ENCODE measurements at regions of chr17 and their contacts with region 1.

Region 1: DNA sequence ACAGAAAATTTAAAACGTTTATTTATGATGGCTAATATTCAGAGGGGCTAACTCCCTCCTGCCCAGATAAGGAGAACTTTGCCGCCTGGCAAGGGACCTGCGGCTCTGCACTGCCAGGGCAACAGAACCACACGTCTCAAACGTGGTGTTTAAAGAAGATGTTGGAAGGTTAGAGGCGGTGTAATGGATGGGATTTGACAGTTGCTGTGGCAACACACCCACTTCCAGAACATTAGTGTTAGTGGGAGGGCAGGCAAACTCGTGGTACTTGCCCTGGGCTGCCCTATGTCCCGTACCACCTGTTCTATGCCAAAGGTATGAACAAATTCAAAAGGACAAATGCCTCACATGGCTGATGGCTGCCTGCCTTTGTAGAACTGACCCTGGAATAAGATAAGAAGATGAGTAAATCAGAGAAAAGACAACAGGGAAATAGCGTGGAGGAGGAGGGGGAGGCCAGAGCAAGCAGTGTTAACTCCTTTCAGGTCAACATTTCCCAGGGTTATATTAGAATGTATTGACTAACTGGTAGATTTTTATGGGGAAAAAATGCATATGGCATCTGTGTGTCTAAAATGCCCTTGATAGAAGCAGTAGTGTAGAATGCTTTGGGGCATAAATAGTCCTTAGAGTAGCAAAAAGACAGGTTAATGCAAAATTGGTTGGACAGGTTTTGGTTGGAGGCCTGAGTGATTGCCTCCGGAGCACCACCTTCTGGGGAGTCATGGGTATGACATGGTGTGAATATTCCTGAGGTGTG is 30.8 kb downstream of the HLF start:
- DNase-seq: peak in 4 of 5 donors; percentile 58 to 64 (median 64)
- H3K4me3 ChIP-seq: no peak overlapping the region
- H3K4me3 Mint-ChIP-seq: no peak overlapping the region
- H3K27ac ChIP-seq: no peak overlapping the region
- H3K27ac Mint-ChIP-seq: peak overlapping the region in 2 of 7 donors; percentile 10 to 24
- H3K4me1 ChIP-seq: no peaks in the 10 kb centered on the region
- H3K4me1 Mint-ChIP-seq: peaks cover 0 to 5% (median under 1%) of the 10 kb centered on the region in 4 donors
- H3K27me3 ChIP-seq: no peaks in the 10 kb centered on the region
- H3K27me3 Mint-ChIP-seq: no peaks in the 10 kb centered on the region

Region 2: GRCh38 chr17:55053855-55054254 is 241.7 kb before region 1 on chr17:
- CTCF ChIA-PET with region 1: interaction called, 12 read pairs
- POLR2A ChIA-PET with region 1: no interaction called
- intact Hi-C with region 1: loop called (anchors 1 kb)
- DNase-seq: peak in 3 of 5 donors; percentile 12 to 22 (median 18)
- H3K4me3 ChIP-seq: no peak overlapping the region
- H3K4me3 Mint-ChIP-seq: no peak overlapping the region
- H3K27ac ChIP-seq: no peak overlapping the region
- H3K27ac Mint-ChIP-seq: peak overlapping the region in 1 of 7 donors; percentile 29
- H3K4me1 ChIP-seq: no peaks in the 10 kb centered on the region
- H3K4me1 Mint-ChIP-seq: no peaks in the 10 kb centered on the region
- H3K27me3 ChIP-seq: no peaks in the 10 kb centered on the region
- H3K27me3 Mint-ChIP-seq: no peaks in the 10 kb centered on the region

Region 3: GRCh38 chr17:55230716-55231115 is 64.9 kb before region 1 on chr17:
- CTCF ChIA-PET with region 1: interaction called, 3 read pairs
- POLR2A ChIA-PET with region 1: no interaction called
- intact Hi-C with region 1: loop called (anchors 1 kb)
- DNase-seq: no peak
- H3K4me3 ChIP-seq: no peak overlapping the region
- H3K4me3 Mint-ChIP-seq: no peak overlapping the region
- H3K27ac ChIP-seq: no peak overlapping the region
- H3K27ac Mint-ChIP-seq: peak overlapping the region in 2 of 7 donors; percentile 13 to 48
- H3K4me1 ChIP-seq: no peaks in the 10 kb centered on the region
- H3K4me1 Mint-ChIP-seq: peaks cover under 1 to 6% (median 2%) of the 10 kb centered on the region in 4 donors
- H3K27me3 ChIP-seq: no peaks in the 10 kb centered on the region
- H3K27me3 Mint-ChIP-seq: peaks cover 0 to 1% of the 10 kb centered on the region in 2 donors

Region 4: DNA sequence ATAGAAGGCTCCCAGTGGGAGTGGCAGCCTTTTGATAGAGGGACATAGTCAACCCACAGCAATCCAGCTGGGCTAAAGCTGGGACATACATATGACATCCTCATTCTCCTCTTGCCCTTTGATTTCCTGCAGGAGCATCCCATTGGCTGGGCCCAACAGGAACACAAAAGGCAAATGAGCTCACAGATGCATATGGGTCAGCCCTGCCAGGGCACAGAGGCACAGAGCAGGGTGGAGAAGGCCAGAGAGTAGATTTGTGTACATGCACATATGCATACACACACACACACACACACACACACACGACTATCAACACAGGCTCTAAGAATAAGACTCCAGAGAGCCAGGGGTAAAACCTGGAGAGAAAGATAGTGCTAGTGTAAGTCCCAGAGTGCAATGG is 67.4 kb after region 1 on chr17:
- CTCF ChIA-PET with region 1: no interaction called
- POLR2A ChIA-PET with region 1: no interaction called
- intact Hi-C with region 1: no loop called
- DNase-seq: no peak
- H3K4me3 ChIP-seq: no peak overlapping the region
- H3K4me3 Mint-ChIP-seq: no peak overlapping the region
- H3K27ac ChIP-seq: no peak overlapping the region
- H3K27ac Mint-ChIP-seq: no peak overlapping the region
- H3K4me1 ChIP-seq: no peaks in the 10 kb centered on the region
- H3K4me1 Mint-ChIP-seq: no peaks in the 10 kb centered on the region
- H3K27me3 ChIP-seq: peaks cover 3% of the 10 kb centered on the region
- H3K27me3 Mint-ChIP-seq: peaks cover 2 to 8% of the 10 kb centered on the region in 2 donors

Region 5: DNA sequence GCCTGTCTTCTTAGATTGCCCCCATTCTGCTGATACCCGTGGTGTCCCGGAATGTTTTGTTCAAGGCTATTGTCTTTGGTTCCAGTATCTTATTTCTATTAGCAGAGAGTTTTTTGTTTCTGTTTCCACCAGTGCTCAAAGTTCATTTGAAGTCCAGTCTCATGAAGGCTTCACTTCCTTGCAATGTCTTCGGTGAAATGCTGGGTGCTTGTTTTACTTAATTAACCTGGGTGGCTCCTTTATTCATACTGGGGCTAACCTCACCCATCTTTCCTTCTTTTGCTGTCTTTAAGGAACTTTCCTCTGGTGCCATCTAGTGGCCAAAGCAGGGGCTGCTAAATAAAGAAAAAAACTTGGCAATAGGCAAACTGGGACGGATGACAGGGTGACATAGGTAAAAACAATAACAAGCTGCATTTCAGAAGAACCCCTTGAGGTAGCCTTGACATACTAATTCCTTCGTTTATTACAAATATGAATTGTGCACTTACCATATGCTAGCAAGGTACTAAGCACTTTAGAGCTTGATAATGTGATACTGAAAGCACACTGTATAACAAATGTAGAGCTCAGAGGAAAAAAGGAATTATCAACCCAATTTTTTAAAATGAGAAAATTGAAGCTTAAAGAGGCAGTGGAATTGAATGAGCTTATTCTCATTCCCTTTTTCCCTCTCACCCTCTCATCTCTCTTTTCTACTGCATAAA is 218.4 kb after region 1 on chr17:
- CTCF ChIA-PET with region 1: no interaction called
- POLR2A ChIA-PET with region 1: no interaction called
- intact Hi-C with region 1: loop called (anchors 1 kb)
- DNase-seq: peak; percentile 54 to 66 (median 58)
- H3K4me3 ChIP-seq: no peak overlapping the region
- H3K4me3 Mint-ChIP-seq: no peak overlapping the region
- H3K27ac ChIP-seq: no peak overlapping the region
- H3K27ac Mint-ChIP-seq: no peak overlapping the region
- H3K4me1 ChIP-seq: no peaks in the 10 kb centered on the region
- H3K4me1 Mint-ChIP-seq: peaks cover 0 to 3% (median 0%) of the 10 kb centered on the region in 4 donors
- H3K27me3 ChIP-seq: peaks cover 6% of the 10 kb centered on the region
- H3K27me3 Mint-ChIP-seq: peaks cover 2 to 4% of the 10 kb centered on the region in 2 donors